ENCODE measurements at regions of chr10 and their contacts with region 1.

Region 1: DNA sequence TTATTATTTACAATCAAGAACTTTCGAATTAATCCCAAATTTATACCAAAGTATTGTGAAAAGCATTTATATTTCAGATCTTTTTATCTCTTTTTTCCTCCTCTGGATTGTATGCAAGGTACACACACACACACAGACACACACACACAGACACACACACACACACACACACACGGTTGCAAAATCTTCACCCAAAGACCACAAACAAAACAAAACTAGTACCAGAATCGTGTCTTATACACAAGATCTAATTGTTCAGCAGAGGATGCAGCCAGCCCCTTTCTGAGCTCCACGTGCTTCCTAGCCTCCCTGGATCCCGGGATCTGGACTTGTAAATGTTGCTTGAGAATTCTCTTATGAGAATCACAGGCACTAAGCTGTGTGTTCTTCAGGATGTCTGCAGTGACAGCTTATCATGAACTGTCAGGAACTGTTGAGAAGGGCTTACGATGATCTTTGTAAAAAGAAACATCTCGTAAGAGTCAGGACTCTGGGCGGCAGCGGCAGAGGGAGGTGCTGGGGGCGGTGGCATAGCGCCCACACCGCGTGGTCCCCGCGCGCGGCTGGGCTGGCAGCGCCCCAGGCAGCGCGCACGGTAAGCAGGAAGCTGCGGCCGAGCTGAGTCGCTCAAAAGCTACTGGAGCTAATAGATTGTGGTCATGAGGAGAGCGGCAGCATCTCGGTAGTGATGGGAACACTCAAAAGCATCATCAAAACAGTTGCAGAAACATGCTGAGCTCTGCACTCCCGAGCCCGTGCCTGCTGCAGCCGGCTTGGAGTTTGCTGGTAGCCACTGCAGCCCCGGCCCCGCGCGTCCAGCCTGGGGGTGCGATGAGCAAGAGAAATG is 277.6 kb downstream of the GATA3 start:
- DNase-seq: peak; percentile 94 to 97 (median 95)
- H3K4me3 ChIP-seq: peak overlapping the region; percentile 67
- H3K4me3 Mint-ChIP-seq: peak overlapping the region; percentile 84 to 94 (median 90)
- H3K27ac ChIP-seq: peak overlapping the region; percentile 78
- H3K27ac Mint-ChIP-seq: peak overlapping the region; percentile 91 to 99 (median 98)
- H3K4me1 ChIP-seq: peaks cover 32% of the 10 kb centered on the region
- H3K4me1 Mint-ChIP-seq: peaks cover 27 to 69% (median 42%) of the 10 kb centered on the region in 4 donors
- H3K27me3 ChIP-seq: no peaks in the 10 kb centered on the region
- H3K27me3 Mint-ChIP-seq: no peaks in the 10 kb centered on the region

Region 2: GRCh38 chr10:8053446-8054290 is 278.4 kb before region 1 on chr10:
- CTCF ChIA-PET with region 1: interaction called, 5 read pairs
- POLR2A ChIA-PET with region 1: interaction called, 145 read pairs
- intact Hi-C with region 1: loop called (anchors 1 kb)
- DNase-seq: peak; percentile 86 to 92 (median 89)
- H3K4me3 ChIP-seq: peak overlapping the region; percentile 84 to 94
- H3K4me3 Mint-ChIP-seq: peak overlapping the region; percentile 93 to 99 (median 98)
- H3K27ac ChIP-seq: peak overlapping the region; percentile 83
- H3K27ac Mint-ChIP-seq: peak overlapping the region; percentile 95 to 99 (median 98)
- H3K4me1 ChIP-seq: peaks cover 60% of the 10 kb centered on the region
- H3K4me1 Mint-ChIP-seq: peaks cover 13 to 66% (median 35%) of the 10 kb centered on the region in 4 donors
- H3K27me3 ChIP-seq: peaks cover 36% of the 10 kb centered on the region
- H3K27me3 Mint-ChIP-seq: peaks cover 20 to 27% of the 10 kb centered on the region in 2 donors

Region 3: DNA sequence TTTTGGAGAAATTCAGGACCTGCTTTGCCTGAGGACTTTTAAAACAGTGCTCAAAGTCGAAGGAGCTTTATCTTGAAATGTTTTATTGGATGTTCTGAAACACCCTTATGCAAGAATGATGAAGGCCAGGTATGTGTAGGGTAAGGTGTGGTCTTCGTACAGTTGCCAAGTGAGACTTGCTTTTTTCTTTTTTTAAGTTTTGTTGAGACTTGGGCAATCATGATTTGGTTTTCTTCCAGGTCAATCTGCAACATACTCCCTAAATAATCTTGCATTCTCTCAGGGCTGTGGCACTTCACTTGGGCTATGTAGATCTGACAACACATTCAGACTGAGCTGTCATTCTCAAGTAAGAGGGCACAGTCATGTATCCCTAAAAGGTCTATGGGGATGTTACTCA is 202.7 kb before region 1 on chr10:
- CTCF ChIA-PET with region 1: no interaction called
- POLR2A ChIA-PET with region 1: no interaction called
- intact Hi-C with region 1: no loop called
- DNase-seq: no peak
- H3K4me3 ChIP-seq: no peak overlapping the region
- H3K4me3 Mint-ChIP-seq: no peak overlapping the region
- H3K27ac ChIP-seq: no peak overlapping the region
- H3K27ac Mint-ChIP-seq: peak overlapping the region in 1 of 7 donors; percentile 42
- H3K4me1 ChIP-seq: peaks cover 15% of the 10 kb centered on the region
- H3K4me1 Mint-ChIP-seq: peaks cover 18 to 34% (median 22%) of the 10 kb centered on the region in 4 donors
- H3K27me3 ChIP-seq: no peaks in the 10 kb centered on the region
- H3K27me3 Mint-ChIP-seq: peaks cover 0 to 1% of the 10 kb centered on the region in 2 donors

Region 4: DNA sequence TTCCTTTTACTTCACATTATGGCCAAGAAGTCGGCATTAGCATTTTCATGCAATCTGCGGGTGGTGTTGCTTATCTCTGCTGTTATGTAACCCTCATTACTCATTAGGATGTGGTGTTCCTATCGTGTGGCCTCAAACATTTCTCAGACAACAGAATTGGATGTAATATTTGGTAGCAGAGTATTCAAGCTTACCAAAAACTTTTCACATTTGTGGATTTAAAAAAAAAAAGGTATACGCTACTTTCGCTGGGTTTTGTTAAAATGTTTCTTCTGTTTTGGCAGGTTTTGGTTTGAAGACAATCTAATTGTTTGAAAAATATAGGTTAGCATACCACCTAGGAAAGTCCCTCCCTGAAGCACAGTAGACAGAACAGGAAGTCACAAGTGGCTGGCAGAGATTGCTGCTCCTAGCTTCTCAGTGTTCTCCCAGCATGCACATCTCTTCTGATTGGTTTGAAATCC is 148.8 kb before region 1 on chr10:
- CTCF ChIA-PET with region 1: interaction called, 4 read pairs
- POLR2A ChIA-PET with region 1: interaction called, 27 read pairs
- intact Hi-C with region 1: loop called (anchors 2 kb)
- DNase-seq: peak; percentile 64 to 83 (median 76)
- H3K4me3 ChIP-seq: no peak overlapping the region
- H3K4me3 Mint-ChIP-seq: peak overlapping the region; percentile 57 to 86 (median 64)
- H3K27ac ChIP-seq: peak overlapping the region; percentile 60
- H3K27ac Mint-ChIP-seq: peak overlapping the region; percentile 87 to 98 (median 90)
- H3K4me1 ChIP-seq: peaks cover 34% of the 10 kb centered on the region
- H3K4me1 Mint-ChIP-seq: peaks cover 23 to 44% (median 35%) of the 10 kb centered on the region in 4 donors
- H3K27me3 ChIP-seq: no peaks in the 10 kb centered on the region
- H3K27me3 Mint-ChIP-seq: no peaks in the 10 kb centered on the region

Region 5: DNA sequence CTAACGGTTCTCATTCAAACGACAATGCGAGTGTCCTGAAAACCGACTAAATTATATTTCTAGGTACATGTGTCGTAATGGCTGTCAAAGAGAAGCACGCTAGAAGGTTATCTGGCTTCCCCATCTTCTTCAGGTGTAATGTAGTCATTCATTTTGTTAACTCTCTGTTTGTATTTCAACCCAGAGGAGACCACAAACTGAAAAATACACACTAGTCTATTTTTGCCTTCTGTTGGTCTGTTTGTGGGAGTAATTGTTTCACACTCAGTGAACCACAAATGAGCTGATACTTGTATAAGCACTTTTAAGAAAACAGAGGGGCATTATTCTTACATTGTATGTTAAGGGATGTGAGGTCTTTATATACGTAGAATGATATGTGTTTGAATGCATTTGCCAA is 28.3 kb after region 1 on chr10:
- CTCF ChIA-PET with region 1: no interaction called
- POLR2A ChIA-PET with region 1: interaction called, 14 read pairs
- intact Hi-C with region 1: no loop called
- DNase-seq: peak in 4 of 5 donors; percentile 9 to 28 (median 18)
- H3K4me3 ChIP-seq: no peak overlapping the region
- H3K4me3 Mint-ChIP-seq: peak overlapping the region in 2 of 8 donors; percentile 26 to 42
- H3K27ac ChIP-seq: no peak overlapping the region
- H3K27ac Mint-ChIP-seq: peak overlapping the region in 5 of 7 donors; percentile 3 to 83 (median 68)
- H3K4me1 ChIP-seq: peaks cover 39% of the 10 kb centered on the region
- H3K4me1 Mint-ChIP-seq: peaks cover 28 to 44% (median 37%) of the 10 kb centered on the region in 4 donors
- H3K27me3 ChIP-seq: no peaks in the 10 kb centered on the region
- H3K27me3 Mint-ChIP-seq: peaks cover 0 to 2% of the 10 kb centered on the region in 2 donors

Region 6: DNA sequence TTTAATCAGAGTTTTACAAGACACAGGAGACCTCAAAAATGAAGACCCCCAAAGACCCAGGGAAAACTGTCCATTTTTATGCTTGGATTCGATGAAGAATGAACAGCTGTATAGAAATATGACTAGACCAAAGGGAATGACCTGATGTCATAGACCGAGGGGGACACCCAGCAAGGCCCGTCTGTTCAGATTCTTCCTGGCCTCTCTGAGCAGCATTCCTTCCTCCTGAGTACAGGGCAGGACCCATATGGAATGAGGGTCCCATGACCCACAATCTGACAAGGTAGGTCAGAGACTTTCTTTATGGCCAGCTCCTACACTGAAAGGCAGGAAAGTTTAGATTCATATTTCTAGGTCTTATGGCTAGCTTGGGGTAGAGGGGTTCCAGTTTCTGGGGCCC is 78.4 kb after region 1 on chr10:
- CTCF ChIA-PET with region 1: interaction called, 4 read pairs
- POLR2A ChIA-PET with region 1: interaction called, 118 read pairs
- intact Hi-C with region 1: no loop called
- DNase-seq: no peak
- H3K4me3 ChIP-seq: no peak overlapping the region
- H3K4me3 Mint-ChIP-seq: no peak overlapping the region
- H3K27ac ChIP-seq: no peak overlapping the region
- H3K27ac Mint-ChIP-seq: peak overlapping the region in 2 of 7 donors; percentile 15 to 17
- H3K4me1 ChIP-seq: peaks cover 35% of the 10 kb centered on the region
- H3K4me1 Mint-ChIP-seq: peaks cover 25 to 52% (median 34%) of the 10 kb centered on the region in 4 donors
- H3K27me3 ChIP-seq: no peaks in the 10 kb centered on the region
- H3K27me3 Mint-ChIP-seq: no peaks in the 10 kb centered on the region

Region 7: DNA sequence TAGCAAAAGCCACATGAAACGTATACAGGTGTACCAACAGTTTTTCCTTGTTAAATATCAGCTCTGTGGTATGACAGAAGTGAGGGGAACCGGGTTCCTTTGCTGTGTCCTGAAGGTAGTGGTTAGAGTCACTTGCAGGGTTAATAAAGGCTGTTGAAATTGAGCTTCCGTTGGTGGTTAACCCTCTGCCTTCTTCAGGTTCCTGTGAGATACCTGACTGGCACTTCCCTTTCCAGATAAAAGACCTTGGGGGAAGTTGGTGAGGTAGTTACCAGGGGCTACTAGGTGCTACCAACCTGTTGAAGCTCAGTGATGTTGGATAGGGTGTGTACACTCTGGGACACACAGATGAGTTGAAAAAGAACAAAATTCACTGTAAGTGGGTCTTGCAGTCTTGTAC is 106.5 kb after region 1 on chr10:
- CTCF ChIA-PET with region 1: interaction called, 9 read pairs
- POLR2A ChIA-PET with region 1: interaction called, 17 read pairs
- intact Hi-C with region 1: no loop called
- DNase-seq: peak; percentile 60 to 73 (median 67)
- H3K4me3 ChIP-seq: no peak overlapping the region
- H3K4me3 Mint-ChIP-seq: peak overlapping the region in 6 of 8 donors; percentile 31 to 79 (median 51)
- H3K27ac ChIP-seq: no peak overlapping the region
- H3K27ac Mint-ChIP-seq: peak overlapping the region; percentile 48 to 90 (median 77)
- H3K4me1 ChIP-seq: peaks cover 28% of the 10 kb centered on the region
- H3K4me1 Mint-ChIP-seq: peaks cover 31 to 46% (median 39%) of the 10 kb centered on the region in 4 donors
- H3K27me3 ChIP-seq: no peaks in the 10 kb centered on the region
- H3K27me3 Mint-ChIP-seq: no peaks in the 10 kb centered on the region

Region 8: GRCh38 chr10:8463853-8464252 is 131.7 kb after region 1 on chr10:
- CTCF ChIA-PET with region 1: no interaction called
- POLR2A ChIA-PET with region 1: no interaction called
- intact Hi-C with region 1: no loop called
- DNase-seq: no peak
- H3K4me3 ChIP-seq: no peak overlapping the region
- H3K4me3 Mint-ChIP-seq: no peak overlapping the region
- H3K27ac ChIP-seq: no peak overlapping the region
- H3K27ac Mint-ChIP-seq: no peak overlapping the region
- H3K4me1 ChIP-seq: no peaks in the 10 kb centered on the region
- H3K4me1 Mint-ChIP-seq: peaks cover 0 to 1% (median 0%) of the 10 kb centered on the region in 4 donors
- H3K27me3 ChIP-seq: no peaks in the 10 kb centered on the region
- H3K27me3 Mint-ChIP-seq: peaks cover 1 to 3% of the 10 kb centered on the region in 2 donors

Measured in CD4-positive, alpha-beta memory T cell (primary cell).